Tibial artery (tissue), 4 donors: ENCODE measurements at regions of chr7 and their contacts with region 1.

Region 1: GRCh38 chr7:16071246-16071857 is 350.0 kb downstream of the CRPPA start:
- DNase-seq: no peak
- H3K4me3 ChIP-seq: no peak overlapping the region
- H3K27ac ChIP-seq: no peak overlapping the region
- H3K4me1 ChIP-seq: peaks cover 0 to 16% (median 6%) of the 10 kb centered on the region in 4 donors
- H3K27me3 ChIP-seq: no peaks in the 10 kb centered on the region
- CTCF ChIP-seq: peak; percentile 79 to 88

Region 2: GRCh38 chr7:15305002-15305600 is 766.3 kb before region 1 on chr7:
- intact Hi-C with region 1: loop called (anchors 5 kb)
- DNase-seq: peak in 1 of 2 donors; percentile 32
- H3K4me3 ChIP-seq: no peak overlapping the region
- H3K27ac ChIP-seq: no peak overlapping the region
- H3K4me1 ChIP-seq: no peaks in the 10 kb centered on the region
- H3K27me3 ChIP-seq: no peaks in the 10 kb centered on the region
- CTCF ChIP-seq: peak; percentile 50 to 75

Region 3: DNA sequence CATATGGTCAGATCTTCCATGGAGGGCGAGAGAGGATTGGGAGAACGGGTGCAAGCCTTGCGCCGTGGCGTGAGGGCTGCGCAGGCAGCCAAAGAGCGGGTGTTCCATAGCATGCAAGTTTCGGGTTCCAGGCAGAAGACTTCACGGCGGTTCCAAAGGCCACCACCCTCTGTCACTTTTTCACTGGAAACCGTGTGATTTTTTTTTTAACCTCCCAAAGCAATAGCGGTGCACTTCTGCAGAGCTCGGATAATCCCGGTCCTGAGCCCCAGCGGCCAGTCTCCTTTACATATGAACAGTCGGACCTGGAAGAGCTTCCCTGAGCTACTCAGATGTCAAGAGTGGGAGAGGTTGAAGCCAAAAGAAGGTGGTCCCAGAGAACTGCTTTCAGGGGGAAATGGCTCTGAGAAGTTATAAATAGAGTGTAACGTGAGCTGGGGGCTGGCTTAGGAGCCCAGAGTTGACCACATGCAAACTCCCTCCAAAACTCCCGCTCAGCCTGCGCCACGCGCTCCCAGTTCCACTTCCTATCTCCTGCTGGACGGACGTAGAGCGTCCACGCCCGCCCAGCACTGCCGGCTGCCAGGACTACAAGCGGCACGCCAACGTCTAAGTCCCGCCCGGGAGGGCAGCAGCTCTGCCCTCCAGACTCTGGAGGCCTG is 384.9 kb before region 1 on chr7 and contains the start of gene MEOX2:
- intact Hi-C with region 1: loop called (anchors 5 kb)
- DNase-seq: peak; percentile 85 to 94
- H3K4me3 ChIP-seq: peak within 1 kb of the TSS; percentile 67 to 72
- H3K27ac ChIP-seq: peak within 1 kb of the TSS; percentile 80 to 87
- H3K4me1 ChIP-seq: peaks cover 0 to 20% (median 3%) of the 10 kb centered on the region in 4 donors
- H3K27me3 ChIP-seq: peaks cover 0 to 3% of the 10 kb centered on the region in 2 donors
- CTCF ChIP-seq: no peak

Region 4: DNA sequence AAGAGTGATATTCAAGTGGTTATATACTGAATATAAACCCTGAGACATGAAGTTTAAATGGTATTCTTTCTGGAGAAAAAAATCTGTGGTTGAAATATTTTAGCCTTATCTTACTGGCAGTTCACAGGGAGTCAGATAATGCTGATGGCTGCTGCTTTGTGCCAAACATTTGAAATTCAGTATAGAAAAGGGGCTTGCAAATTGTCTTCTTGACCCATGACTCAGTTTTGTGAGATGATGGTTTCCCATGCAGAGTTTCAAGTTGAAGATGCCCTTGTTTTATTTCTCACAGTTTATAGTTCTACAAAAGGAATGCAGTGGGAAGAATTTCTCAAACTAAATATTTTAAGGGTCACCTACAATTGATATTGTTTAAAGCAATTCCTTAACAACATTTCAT is 133.8 kb before region 1 on chr7:
- intact Hi-C with region 1: no loop called
- DNase-seq: no peak
- H3K4me3 ChIP-seq: no peak overlapping the region
- H3K27ac ChIP-seq: no peak overlapping the region
- H3K4me1 ChIP-seq: no peaks in the 10 kb centered on the region
- H3K27me3 ChIP-seq: no peaks in the 10 kb centered on the region
- CTCF ChIP-seq: no peak

Region 5: GRCh38 chr7:16028103-16028502 is 43.2 kb before region 1 on chr7:
- intact Hi-C with region 1: no loop called
- DNase-seq: no peak
- H3K4me3 ChIP-seq: no peak overlapping the region
- H3K27ac ChIP-seq: peak overlapping the region; percentile 58 to 66
- H3K4me1 ChIP-seq: peaks cover 0 to 45% (median 24%) of the 10 kb centered on the region in 4 donors
- H3K27me3 ChIP-seq: no peaks in the 10 kb centered on the region
- CTCF ChIP-seq: no peak

Region 6: GRCh38 chr7:16136896-16137295 is 65.5 kb after region 1 on chr7:
- intact Hi-C with region 1: no loop called
- DNase-seq: no peak
- H3K4me3 ChIP-seq: no peak overlapping the region
- H3K27ac ChIP-seq: no peak overlapping the region
- H3K4me1 ChIP-seq: no peaks in the 10 kb centered on the region
- H3K27me3 ChIP-seq: no peaks in the 10 kb centered on the region
- CTCF ChIP-seq: no peak